Activated CD4-positive, alpha-beta T cell treated with anti-CD3 and anti-CD28 coated beads, Interleukin-2, amount 10 ng/mL, durations not matched to agents 24 days and 14 days (primary cell): ENCODE measurements at regions of chr6 and their contacts with region 1.

Region 1: GRCh38 chr6:30814136-30815040 is 69.9 kb upstream of the DDR1 start:
- DNase-seq: peak; percentile 85
- H3K4me3 Mint-ChIP-seq: peak overlapping the region; percentile 67
- H3K27ac Mint-ChIP-seq: peak overlapping the region; percentile 98
- H3K4me1 Mint-ChIP-seq: peaks cover 75% of the 10 kb centered on the region
- H3K27me3 Mint-ChIP-seq: peaks cover 2% of the 10 kb centered on the region

Region 2: GRCh38 chr6:30489081-30490025 is 325.0 kb before region 1 on chr6 and contains the start of gene HLA-E:
- intact Hi-C with region 1: loop called (anchors 10 kb)
- DNase-seq: peak; percentile 98
- H3K4me3 Mint-ChIP-seq: peak within 1 kb of the TSS; percentile 100
- H3K27ac Mint-ChIP-seq: peak within 1 kb of the TSS; percentile 97
- H3K4me1 Mint-ChIP-seq: peaks cover 52% of the 10 kb centered on the region
- H3K27me3 Mint-ChIP-seq: no peaks in the 10 kb centered on the region
- total RNA-seq, gene HLA-E: 484 and 488 TPM in 2 replicates

Region 3: DNA sequence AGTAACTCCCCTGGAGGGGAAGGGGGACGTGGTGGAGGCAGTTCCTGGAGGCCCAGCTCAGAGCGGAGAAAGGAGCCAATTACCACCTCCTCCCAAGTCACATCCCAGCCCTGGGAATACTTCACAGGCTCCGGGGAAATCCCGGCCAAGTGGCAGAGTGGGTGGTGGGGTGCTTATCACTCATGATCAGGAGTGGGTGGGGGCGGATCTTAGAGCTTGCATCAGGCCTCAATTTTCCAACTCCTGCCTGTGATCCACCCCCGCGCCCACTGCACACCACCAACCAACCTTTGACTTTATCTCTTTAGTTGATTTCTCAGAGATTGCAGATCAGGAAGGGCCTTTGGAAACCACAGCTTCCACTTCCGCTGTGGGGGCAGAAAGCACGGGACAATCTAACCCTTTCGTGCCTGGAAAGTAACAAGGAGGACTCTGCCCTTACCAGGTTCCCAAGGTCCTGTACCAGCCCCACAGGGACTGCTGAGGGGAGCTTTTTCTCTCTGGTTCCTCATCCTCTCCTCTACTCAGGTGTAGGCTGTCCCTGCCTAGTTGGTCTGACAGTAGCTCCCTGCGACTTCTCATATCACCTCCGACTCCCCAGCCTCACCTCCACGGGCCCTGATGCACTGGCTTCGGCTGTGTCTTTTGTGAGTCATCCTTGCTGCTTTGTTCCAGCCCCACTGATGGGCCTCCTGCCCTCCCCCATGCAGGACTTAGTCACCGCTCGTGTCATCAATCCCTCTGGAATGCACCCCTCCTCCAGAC is 45.1 kb before region 1 on chr6:
- intact Hi-C with region 1: loop called (anchors 1 kb)
- DNase-seq: peak; percentile 91
- H3K4me3 Mint-ChIP-seq: peak overlapping the region; percentile 76
- H3K27ac Mint-ChIP-seq: peak overlapping the region; percentile 97
- H3K4me1 Mint-ChIP-seq: peaks cover 75% of the 10 kb centered on the region
- H3K27me3 Mint-ChIP-seq: peaks cover 2% of the 10 kb centered on the region

Region 4: GRCh38 chr6:30787954-30788353 is 26.4 kb before region 1 on chr6:
- intact Hi-C with region 1: loop called (anchors 1 kb)
- DNase-seq: peak; percentile 82
- H3K4me3 Mint-ChIP-seq: peak overlapping the region; percentile 72
- H3K27ac Mint-ChIP-seq: peak overlapping the region; percentile 94
- H3K4me1 Mint-ChIP-seq: peaks cover 55% of the 10 kb centered on the region
- H3K27me3 Mint-ChIP-seq: no peaks in the 10 kb centered on the region

Region 5: GRCh38 chr6:31575335-31575901 is 761.0 kb after region 1 on chr6 and contains the start of gene TNF:
- intact Hi-C with region 1: loop called (anchors 10 kb)
- DNase-seq: peak; percentile 96
- H3K4me3 Mint-ChIP-seq: peak within 1 kb of the TSS; percentile 99
- H3K27ac Mint-ChIP-seq: peak within 1 kb of the TSS; percentile 99
- H3K4me1 Mint-ChIP-seq: peaks cover 78% of the 10 kb centered on the region
- H3K27me3 Mint-ChIP-seq: no peaks in the 10 kb centered on the region
- total RNA-seq, gene TNF: 294 and 303 TPM in 2 replicates